ENCODE measurements at regions of chr20 and their contacts with region 1.

Region 1: GRCh38 chr20:36861875-36862801 is 13.8 kb upstream of the TLDC2 start:
- DNase-seq: peak; percentile 82 to 92
- ATAC-seq: peak; percentile 61 to 84 (median 72)
- H3K4me3 ChIP-seq: peak overlapping the region; percentile 46 to 84 (median 73)
- H3K27ac ChIP-seq: peak overlapping the region; percentile 82 to 95 (median 94)
- H3K4me1 ChIP-seq: peaks cover 31 to 64% (median 59%) of the 10 kb centered on the region in 9 donors
- H3K27me3 ChIP-seq: peaks cover 0 to 7% (median 0%) of the 10 kb centered on the region in 7 donors
- CTCF ChIP-seq: no peak

Region 2: GRCh38 chr20:36773597-36774390 is 88.3 kb before region 1 on chr20 and contains the start of gene DSN1:
- intact Hi-C with region 1: loop called in 6 of 10 experiments (anchors 2 to 10 kb)
- DNase-seq: peak; percentile 98 to 100
- ATAC-seq: peak; percentile 96 to 99 (median 97)
- H3K4me3 ChIP-seq: peak within 1 kb of the TSS; percentile 49 to 85 (median 78)
- H3K27ac ChIP-seq: peak within 1 kb of the TSS; percentile 89 to 99 (median 94)
- H3K4me1 ChIP-seq: peaks cover 0 to 39% (median 25%) of the 10 kb centered on the region in 9 donors
- H3K27me3 ChIP-seq: no peaks in the 10 kb centered on the region
- CTCF ChIP-seq: peak in 1 of 9 donors; percentile 79
- total RNA-seq, gene DSN1: 3.2 to 6.0 (median 4.9) TPM

Region 3: GRCh38 chr20:36792422-36792821 is 69.7 kb before region 1 on chr20:
- intact Hi-C with region 1: loop called in 1 of 10 experiments (anchors 5 kb)
- DNase-seq: peak in 1 of 2 donors; percentile 45
- ATAC-seq: peak in 7 of 8 donors; percentile 30 to 83 (median 57)
- H3K4me3 ChIP-seq: no peak overlapping the region
- H3K27ac ChIP-seq: no peak overlapping the region
- H3K4me1 ChIP-seq: peaks cover 0 to 18% (median 5%) of the 10 kb centered on the region in 9 donors
- H3K27me3 ChIP-seq: no peaks in the 10 kb centered on the region
- CTCF ChIP-seq: peak in 8 of 9 donors; percentile 26 to 62 (median 46)

Region 4: GRCh38 chr20:36821964-36822437 is 40.1 kb before region 1 on chr20:
- intact Hi-C with region 1: loop called in 4 of 10 experiments (anchors 5 to 10 kb)
- DNase-seq: no peak
- ATAC-seq: peak; percentile 45 to 83 (median 70)
- H3K4me3 ChIP-seq: no peak overlapping the region
- H3K27ac ChIP-seq: peak overlapping the region in 5 of 10 donors; percentile 4 to 60 (median 28)
- H3K4me1 ChIP-seq: peaks cover 0 to 49% (median 29%) of the 10 kb centered on the region in 9 donors
- H3K27me3 ChIP-seq: no peaks in the 10 kb centered on the region
- CTCF ChIP-seq: no peak

Region 5: DNA sequence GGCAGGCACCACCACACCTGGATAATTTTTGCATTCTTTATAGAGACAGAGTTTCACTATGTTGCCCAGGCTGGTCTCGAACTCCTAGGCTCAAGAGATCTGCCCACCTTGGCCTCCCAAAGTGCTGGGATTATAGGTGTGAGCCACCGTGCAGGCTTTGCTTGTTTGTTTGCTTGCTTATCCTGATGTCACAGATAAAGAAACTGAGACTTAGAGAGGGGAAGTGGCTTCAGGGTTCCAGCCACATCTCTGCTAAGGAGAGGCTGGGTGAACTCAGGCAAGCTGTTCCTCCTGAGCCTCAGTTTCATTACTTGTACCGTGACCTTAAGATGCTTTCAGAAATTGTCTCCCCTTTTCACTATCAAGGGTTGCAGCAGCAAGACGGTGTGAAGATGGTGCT is 34.7 kb before region 1 on chr20:
- intact Hi-C with region 1: loop called in 5 of 10 experiments (anchors 2 to 5 kb)
- DNase-seq: no peak
- ATAC-seq: no peak
- H3K4me3 ChIP-seq: no peak overlapping the region
- H3K27ac ChIP-seq: peak overlapping the region in 8 of 10 donors; percentile 9 to 90 (median 66)
- H3K4me1 ChIP-seq: peaks cover 19 to 65% (median 52%) of the 10 kb centered on the region in 9 donors
- H3K27me3 ChIP-seq: no peaks in the 10 kb centered on the region
- CTCF ChIP-seq: no peak

Region 6: GRCh38 chr20:36835453-36836198 is 26.5 kb before region 1 on chr20:
- intact Hi-C with region 1: loop called in 4 of 10 experiments (anchors 1 to 2 kb)
- DNase-seq: peak; percentile 93 to 94
- ATAC-seq: peak; percentile 85 to 95 (median 92)
- H3K4me3 ChIP-seq: peak overlapping the region in 7 of 10 donors; percentile 13 to 43 (median 37)
- H3K27ac ChIP-seq: peak overlapping the region in 9 of 10 donors; percentile 75 to 90 (median 86)
- H3K4me1 ChIP-seq: peaks cover 33 to 66% (median 60%) of the 10 kb centered on the region in 9 donors
- H3K27me3 ChIP-seq: no peaks in the 10 kb centered on the region
- CTCF ChIP-seq: no peak

Region 7: DNA sequence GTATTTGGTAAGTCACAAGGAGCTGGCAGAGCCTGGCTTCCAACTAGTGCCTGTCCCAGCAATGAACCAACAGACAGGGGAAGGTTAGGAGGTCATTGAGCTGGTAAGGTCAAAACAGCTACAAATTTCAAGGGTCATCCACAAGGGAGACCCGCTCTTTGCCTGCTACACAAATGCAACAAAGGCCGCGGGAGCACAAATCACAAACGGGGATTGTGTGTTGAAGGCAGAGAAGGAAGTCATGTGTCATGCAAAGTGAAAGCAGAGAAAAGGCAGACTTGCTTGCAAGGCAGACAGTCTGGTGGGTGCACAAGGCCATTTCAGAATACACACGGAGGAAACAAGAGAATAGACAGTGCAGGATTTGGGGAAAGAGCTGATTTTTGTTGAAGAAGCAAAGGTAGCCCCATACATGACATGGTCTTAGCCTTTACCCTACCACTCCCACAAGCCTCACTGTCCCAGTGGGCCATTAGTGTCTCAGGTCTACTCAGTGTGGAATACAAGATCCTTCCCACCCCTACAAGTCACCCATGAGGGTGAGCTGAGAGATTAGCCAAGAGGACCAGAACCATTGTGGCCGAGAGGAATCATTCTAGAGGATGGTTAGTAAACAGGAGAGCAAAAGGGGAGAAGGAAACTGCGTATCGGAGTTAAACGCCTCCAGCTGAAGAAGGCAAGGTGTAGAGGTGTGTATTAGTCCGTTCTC is 107.5 kb after region 1 on chr20:
- intact Hi-C with region 1: no loop called
- DNase-seq: no peak
- ATAC-seq: peak in 6 of 8 donors; percentile 24 to 57 (median 37)
- H3K4me3 ChIP-seq: no peak overlapping the region
- H3K27ac ChIP-seq: peak overlapping the region in 2 of 10 donors; percentile 14 to 84
- H3K4me1 ChIP-seq: peaks cover 0 to 29% (median 0%) of the 10 kb centered on the region in 9 donors
- H3K27me3 ChIP-seq: no peaks in the 10 kb centered on the region
- CTCF ChIP-seq: no peak

Measured in heart right ventricle (tissue), 16 donors.